ENCODE measurements at regions of chr1 and their contacts with region 1.

Region 1: DNA sequence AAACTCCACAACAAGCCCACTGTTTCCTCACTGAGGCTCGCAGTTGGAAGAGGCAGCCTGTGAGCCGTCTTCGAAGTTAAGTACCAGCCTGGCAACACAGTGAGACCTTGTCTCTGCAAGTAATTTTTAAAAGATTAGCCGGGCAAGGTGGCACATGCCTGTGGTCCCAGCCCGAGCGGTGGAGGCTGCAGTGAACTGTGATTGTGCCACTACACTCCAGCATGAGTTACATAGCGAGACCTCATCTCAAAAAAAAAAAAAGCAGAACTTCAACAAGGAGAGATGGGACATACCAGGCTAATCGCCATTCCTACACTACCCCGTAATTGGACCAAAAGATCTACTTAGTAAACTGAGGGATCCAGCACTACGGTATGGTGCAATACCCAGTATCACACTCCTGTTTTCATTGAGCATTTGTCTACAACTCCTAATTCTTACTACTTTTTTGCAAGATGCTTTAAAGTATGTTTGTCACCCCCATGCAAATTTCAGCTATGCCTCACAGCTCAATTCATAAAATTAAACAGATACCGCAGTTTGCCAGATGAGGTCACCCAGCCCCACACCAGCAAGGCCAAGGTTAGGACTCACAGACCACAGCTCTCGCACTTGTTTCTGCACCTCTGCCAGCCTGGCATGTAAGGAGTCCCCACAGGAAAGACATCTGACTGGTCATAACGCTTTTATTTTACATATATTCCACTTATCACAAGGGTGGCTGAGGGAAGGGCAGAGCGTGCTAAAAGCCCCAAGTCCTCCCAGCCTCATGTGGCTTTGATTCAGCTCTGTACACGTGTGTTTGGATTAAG is 21.0 kb downstream of the SDE2 start:
- DNase-seq: peak in 1 of 10 donors; percentile 61

Region 2: DNA sequence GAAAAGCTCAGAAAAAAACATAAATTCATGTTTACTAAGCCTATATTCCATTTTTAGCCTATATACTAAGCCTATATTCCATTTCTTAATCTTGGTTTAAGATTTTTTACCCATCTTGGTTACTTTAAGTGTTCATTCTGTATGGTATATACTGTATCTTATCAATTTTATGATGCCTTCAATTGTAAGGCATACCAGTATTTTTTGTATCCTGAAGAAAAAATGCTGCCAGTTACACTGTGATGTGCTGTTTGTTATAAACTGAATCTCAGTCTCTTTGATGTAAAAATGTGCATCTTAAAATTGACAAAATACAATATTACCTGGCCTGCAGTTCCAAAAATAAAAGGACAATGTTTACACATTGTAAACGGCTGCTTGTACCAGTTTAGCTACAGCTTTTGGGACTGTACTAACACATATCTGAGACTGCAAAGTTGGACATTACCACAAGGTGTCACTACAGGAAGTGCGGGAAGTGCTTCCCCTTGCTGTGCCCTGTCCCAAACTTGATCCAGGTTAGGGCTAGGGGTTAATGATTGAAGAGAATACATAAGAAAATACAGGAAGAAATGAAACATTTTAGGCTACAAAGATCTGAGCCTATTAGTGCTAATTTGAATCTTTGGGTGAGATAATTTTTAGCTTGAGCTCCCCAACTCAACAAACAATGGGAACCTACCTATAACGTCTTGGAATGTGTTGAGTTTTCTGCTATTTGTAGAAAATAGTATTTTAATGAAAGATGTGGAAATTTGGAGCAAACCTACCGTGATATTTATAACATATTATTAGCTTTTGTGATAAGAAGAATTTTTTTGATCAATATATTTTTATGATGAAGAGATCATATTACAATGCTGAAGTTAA is 659.2 kb before region 1 on chr1:
- intact Hi-C with region 1: loop called (anchors 10 kb)
- DNase-seq: no peak

Region 3: DNA sequence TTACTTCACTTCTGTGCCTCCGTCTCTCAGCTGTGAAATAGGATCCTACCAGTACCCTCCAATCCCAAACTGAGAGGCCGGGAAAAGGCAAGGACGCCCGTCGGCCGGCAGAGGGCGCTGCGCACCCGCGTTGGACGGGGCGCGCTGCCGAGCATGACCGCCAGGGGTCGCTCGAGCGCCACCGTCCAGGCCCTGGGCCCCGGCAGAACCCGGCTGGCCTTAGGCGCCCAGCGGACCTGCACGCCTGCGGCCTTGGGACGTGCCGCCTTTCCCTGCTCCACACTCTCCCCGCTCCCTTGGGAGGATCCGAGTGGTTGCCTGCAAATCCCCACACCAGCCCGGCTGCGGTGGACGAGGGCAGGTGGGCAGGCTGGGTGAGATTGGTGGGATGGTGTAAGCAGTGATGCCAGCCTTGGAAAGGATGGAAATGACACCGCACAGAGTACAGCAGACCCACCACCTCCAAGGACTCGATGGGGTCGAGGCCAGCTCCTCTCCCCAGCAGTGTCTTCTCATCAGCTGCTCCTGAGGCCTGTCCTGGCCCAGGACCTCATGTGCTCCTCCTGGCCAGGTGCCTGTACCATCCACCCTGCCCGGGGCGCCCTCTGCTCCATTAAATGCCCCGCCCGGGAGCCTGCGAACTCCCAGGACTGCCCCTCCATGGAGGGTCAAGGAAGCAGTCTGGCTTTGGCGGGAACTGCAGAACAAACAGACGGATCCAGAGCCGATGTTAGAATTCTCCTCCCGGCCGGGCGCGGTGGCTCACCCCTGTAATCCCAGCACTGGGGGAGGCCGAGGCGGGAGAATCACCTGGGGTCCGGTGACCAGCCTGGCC is 502.9 kb before region 1 on chr1:
- intact Hi-C with region 1: loop called (anchors 1 kb)
- DNase-seq: peak in 9 of 10 donors; percentile 52 to 95 (median 63)

Region 4: GRCh38 chr1:225554216-225554812 is 423.8 kb before region 1 on chr1:
- intact Hi-C with region 1: loop called (anchors 5 kb)
- DNase-seq: no peak

Region 5: GRCh38 chr1:225772323-225772768 is 205.8 kb before region 1 on chr1:
- intact Hi-C with region 1: loop called (anchors 5 kb)
- DNase-seq: peak; percentile 64 to 97 (median 80)

Region 6: DNA sequence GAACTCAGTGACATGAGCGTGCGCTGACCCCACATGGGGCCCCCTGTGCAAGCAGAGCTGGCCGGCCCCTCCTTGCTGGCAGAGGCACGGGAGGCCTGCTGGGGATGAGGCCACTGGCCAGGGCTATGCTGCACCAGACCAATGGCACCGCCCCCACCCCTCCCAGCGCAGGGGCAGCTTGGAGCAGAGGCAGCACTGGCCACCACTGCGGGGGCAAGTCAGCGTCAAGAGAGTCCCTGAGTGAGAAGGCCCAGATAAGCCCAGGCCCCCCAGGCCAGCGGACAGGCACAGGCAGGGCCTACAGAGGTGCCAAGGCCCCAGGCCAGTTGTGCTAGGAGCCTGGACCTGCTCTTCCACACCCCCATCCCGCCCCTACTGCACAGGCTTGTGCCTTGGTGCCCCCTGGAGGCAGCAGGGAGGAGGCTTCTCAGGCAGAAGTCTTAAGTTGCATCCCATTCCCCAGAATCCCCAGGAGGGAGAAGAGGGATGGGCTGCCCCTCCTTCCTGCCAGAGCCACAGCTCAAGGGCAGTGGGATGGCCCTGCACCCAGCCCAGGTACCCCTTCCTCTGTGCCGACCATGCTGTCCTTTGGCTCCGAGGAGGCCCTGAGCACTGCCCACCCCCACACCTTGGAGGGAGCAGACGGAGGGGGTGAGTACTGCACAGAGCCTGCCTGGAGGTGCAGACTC is 132.4 kb before region 1 on chr1:
- intact Hi-C with region 1: loop called (anchors 10 kb)
- DNase-seq: peak in 9 of 10 donors; percentile 36 to 93 (median 63)

Region 7: GRCh38 chr1:225923692-225924555 is 54.2 kb before region 1 on chr1 and contains the start of gene PYCR2:
- intact Hi-C with region 1: loop called (anchors 5 kb)
- DNase-seq: peak; percentile 91 to 99 (median 94)